OCI-LY7 (cell line): ENCODE measurements at regions of chr7 and their contacts with region 1.

Region 1: DNA sequence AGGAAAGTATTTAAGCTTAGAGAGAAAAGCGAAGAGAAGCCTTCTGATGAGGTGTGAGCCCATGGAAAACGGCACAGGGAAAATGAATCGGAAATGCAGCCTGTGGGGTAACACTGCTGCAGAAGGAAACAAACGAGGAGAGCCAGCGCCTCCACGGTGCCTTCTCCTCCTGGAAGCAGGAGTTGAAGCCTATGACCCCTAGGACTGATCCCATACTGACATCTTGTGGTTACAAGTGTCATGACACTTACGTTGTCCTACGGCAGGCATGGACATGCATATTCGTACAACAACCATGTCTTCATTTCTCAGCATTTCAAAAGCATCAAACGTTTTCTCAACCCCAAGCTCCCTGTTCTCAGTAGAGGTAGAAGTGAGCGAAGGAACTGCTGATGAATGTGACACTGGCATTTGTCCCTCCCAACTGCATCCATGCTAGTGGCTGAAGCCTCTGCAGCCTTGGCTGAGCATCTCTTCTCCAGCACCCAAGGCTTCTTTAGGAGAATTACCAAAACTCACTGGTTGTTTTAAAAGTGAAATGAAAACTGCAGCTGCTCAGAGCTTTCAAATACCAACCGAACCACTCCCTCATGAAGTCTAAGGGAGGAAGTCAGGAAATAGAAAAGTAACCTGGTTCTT is 160.2 kb downstream of the JAZF1 start:
- DNase-seq: peak; percentile 67
- H3K4me3 ChIP-seq: no peak overlapping the region
- H3K27ac ChIP-seq: no peak overlapping the region
- H3K4me1 ChIP-seq: no peaks in the 10 kb centered on the region
- CTCF ChIP-seq: peak; percentile 88

Region 2: GRCh38 chr7:27774717-27775328 is 245.6 kb before region 1 on chr7:
- CTCF ChIA-PET with region 1: no interaction called
- POLR2A ChIA-PET with region 1: no interaction called
- intact Hi-C with region 1: loop called (anchors 2 kb)
- DNase-seq: peak; percentile 53
- H3K4me3 ChIP-seq: no peak overlapping the region
- H3K27ac ChIP-seq: no peak overlapping the region
- H3K4me1 ChIP-seq: no peaks in the 10 kb centered on the region
- CTCF ChIP-seq: peak; percentile 99